ENCODE measurements at regions of chr19 and their contacts with region 1.

Region 1: GRCh38 chr19:1825909-1826556 is 14.0 kb upstream of the ATP8B3 start:
- DNase-seq: peak; percentile 93
- ATAC-seq: peak; percentile 81
- H3K4me3 Mint-ChIP-seq: no peak overlapping the region
- H3K27ac Mint-ChIP-seq: peak overlapping the region; percentile 92
- H3K4me1 Mint-ChIP-seq: peaks cover 6% of the 10 kb centered on the region; the same call in 1 of the 2 replicates
- H3K27me3 Mint-ChIP-seq: no peaks in the 10 kb centered on the region
- CTCF ChIP-seq: peak; percentile 85

Region 2: GRCh38 chr19:1490311-1491113 is 335.5 kb before region 1 on chr19 and contains the start of gene PCSK4:
- CTCF ChIA-PET with region 1: interaction called, 17 read pairs
- POLR2A ChIA-PET with region 1: no interaction called
- DNase-seq: peak; percentile 98
- ATAC-seq: peak; percentile 91
- H3K4me3 Mint-ChIP-seq: peak within 1 kb of the TSS; percentile 82
- H3K27ac Mint-ChIP-seq: peak within 1 kb of the TSS; percentile 98
- H3K4me1 Mint-ChIP-seq: peaks cover 6% of the 10 kb centered on the region
- H3K27me3 Mint-ChIP-seq: peaks cover 24% of the 10 kb centered on the region
- CTCF ChIP-seq: no peak
- total RNA-seq, gene PCSK4: 18.6 to 22.4 TPM (median 21.5 TPM) in 3 replicates

Region 3: GRCh38 chr19:1672038-1672768 is 153.8 kb before region 1 on chr19:
- CTCF ChIA-PET with region 1: interaction called, 15 read pairs
- POLR2A ChIA-PET with region 1: interaction called, 3 read pairs
- DNase-seq: peak; percentile 62
- ATAC-seq: peak; percentile 24
- H3K4me3 Mint-ChIP-seq: peak overlapping the region; percentile 41
- H3K27ac Mint-ChIP-seq: no peak overlapping the region
- H3K4me1 Mint-ChIP-seq: peaks cover 18% of the 10 kb centered on the region
- H3K27me3 Mint-ChIP-seq: peaks cover 90% of the 10 kb centered on the region
- CTCF ChIP-seq: peak; percentile 84

Region 4: DNA sequence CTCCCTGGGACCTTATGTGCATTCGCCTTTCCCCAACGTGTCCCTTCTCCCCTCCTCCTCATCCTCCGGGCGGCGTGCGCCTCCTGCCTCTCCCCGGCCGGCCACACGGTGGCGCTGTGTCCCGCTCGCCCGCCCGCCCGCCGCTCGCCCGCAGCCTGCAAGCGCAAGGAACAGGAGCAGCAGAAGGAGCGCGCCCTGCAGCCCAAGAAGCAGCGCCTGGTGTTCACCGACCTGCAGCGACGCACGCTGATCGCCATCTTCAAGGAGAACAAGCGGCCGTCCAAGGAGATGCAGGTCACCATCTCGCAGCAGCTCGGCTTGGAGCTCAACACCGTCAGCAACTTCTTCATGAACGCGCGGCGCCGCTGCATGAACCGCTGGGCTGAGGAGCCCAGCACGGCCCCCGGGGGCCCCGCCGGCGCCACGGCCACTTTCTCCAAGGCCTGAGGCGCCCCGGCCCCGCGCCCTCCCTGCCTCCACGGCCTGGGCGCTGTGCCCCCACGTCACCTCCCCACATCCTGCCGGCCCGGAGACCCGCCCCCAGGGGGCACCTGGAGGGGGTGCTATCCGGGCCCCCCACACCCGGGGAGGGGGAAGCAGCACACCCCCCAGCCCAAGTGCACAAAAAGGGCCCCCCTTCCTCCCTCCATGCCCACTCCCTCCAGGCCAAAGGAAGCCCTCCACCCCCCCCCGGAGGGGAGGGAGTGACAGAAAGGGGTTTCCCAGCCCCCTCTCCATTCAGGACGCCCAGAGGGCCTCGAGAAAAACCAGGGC is 50.8 kb before region 1 on chr19:
- CTCF ChIA-PET with region 1: interaction called, 53 read pairs
- POLR2A ChIA-PET with region 1: no interaction called
- DNase-seq: peak; percentile 72
- ATAC-seq: peak; percentile 85
- H3K4me3 Mint-ChIP-seq: peak overlapping the region; percentile 58
- H3K27ac Mint-ChIP-seq: no peak overlapping the region
- H3K4me1 Mint-ChIP-seq: peaks cover 16% of the 10 kb centered on the region
- H3K27me3 Mint-ChIP-seq: peaks cover 98% of the 10 kb centered on the region
- CTCF ChIP-seq: peak; percentile 98

Region 5: GRCh38 chr19:1794424-1795172 is 31.4 kb before region 1 on chr19:
- CTCF ChIA-PET with region 1: interaction called, 86 read pairs
- POLR2A ChIA-PET with region 1: interaction called, 3 read pairs
- DNase-seq: no peak
- ATAC-seq: no peak; the same call in 1 of the 2 replicates
- H3K4me3 Mint-ChIP-seq: no peak overlapping the region
- H3K27ac Mint-ChIP-seq: peak overlapping the region; percentile 45; the same call in 1 of the 2 replicates
- H3K4me1 Mint-ChIP-seq: peaks cover 12% of the 10 kb centered on the region
- H3K27me3 Mint-ChIP-seq: peaks cover 10% of the 10 kb centered on the region
- CTCF ChIP-seq: no peak

Region 6: DNA sequence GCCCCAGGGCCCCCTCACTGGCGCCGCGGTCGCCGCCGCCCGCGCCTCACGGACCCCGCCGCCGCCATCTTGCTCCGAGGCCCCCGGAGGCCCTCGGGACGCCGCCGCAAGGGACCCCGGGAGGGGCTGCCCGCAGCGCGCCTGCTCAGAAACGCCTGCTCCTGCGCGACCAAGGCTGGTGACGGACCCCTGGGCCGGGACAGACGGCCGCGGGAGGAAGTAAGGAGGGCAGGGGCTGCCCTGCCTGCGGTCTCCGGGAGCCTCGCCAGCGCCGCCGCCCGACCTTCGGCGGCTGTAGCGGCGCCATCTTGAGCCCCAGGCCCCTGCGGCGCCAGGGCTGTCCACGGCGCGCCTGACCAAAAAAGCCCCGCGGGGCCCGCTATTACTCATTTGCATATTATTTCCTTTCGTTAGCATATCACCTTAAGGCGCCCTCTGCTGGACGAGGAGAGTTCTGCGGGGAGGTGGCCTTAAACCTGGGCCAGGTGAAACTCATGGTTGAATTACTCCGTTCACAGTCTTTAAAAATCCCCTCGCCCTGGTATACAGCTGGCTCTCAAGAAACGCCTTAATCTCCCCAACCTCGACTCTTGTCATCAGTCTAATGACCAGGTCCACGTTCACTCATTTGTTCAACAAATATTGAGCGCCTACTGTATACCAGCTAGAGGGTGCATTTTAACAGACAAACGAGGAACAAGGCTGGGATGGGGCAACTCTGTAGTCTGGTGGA is 22.5 kb after region 1 on chr19 and contains the start of gene REXO1:
- CTCF ChIA-PET with region 1: interaction called, 63 read pairs
- POLR2A ChIA-PET with region 1: no interaction called
- DNase-seq: peak; percentile 99
- ATAC-seq: peak; percentile 46
- H3K4me3 Mint-ChIP-seq: peak within 1 kb of the TSS; percentile 93
- H3K27ac Mint-ChIP-seq: peak within 1 kb of the TSS; percentile 97
- H3K4me1 Mint-ChIP-seq: peaks cover 25% of the 10 kb centered on the region
- H3K27me3 Mint-ChIP-seq: no peaks in the 10 kb centered on the region
- CTCF ChIP-seq: peak; percentile 92
- total RNA-seq, gene REXO1: 48.9 to 61.1 TPM (median 50.1 TPM) in 3 replicates

Region 7: GRCh38 chr19:1875646-1876495 is 49.8 kb after region 1 on chr19:
- CTCF ChIA-PET with region 1: interaction called, 14 read pairs
- POLR2A ChIA-PET with region 1: interaction called, 4 read pairs
- DNase-seq: peak; percentile 88
- ATAC-seq: peak; percentile 84
- H3K4me3 Mint-ChIP-seq: peak overlapping the region; percentile 99
- H3K27ac Mint-ChIP-seq: peak overlapping the region; percentile 86
- H3K4me1 Mint-ChIP-seq: peaks cover 16% of the 10 kb centered on the region
- H3K27me3 Mint-ChIP-seq: no peaks in the 10 kb centered on the region
- CTCF ChIP-seq: no peak